B cell (primary cell): ENCODE measurements at regions of chr12 and their contacts with region 1.

Region 1: GRCh38 chr12:67630373-67631088 is 18.0 kb upstream of the DYRK2 start:
- DNase-seq: peak; percentile 87
- ATAC-seq: peak; percentile 100
- H3K4me3 ChIP-seq: peak overlapping the region in 3 of 5 experiments; percentile 6 to 55 (median 20)
- H3K4me3 Mint-ChIP-seq: peak overlapping the region; percentile 67
- H3K27ac ChIP-seq: peak overlapping the region; percentile 71 to 85
- H3K27ac Mint-ChIP-seq: peak overlapping the region; percentile 94
- H3K4me1 ChIP-seq: peaks cover 55 to 56% of the 10 kb centered on the region in 2 donors
- H3K4me1 Mint-ChIP-seq: peaks cover 60% of the 10 kb centered on the region
- H3K27me3 ChIP-seq: no peaks in the 10 kb centered on the region
- H3K27me3 Mint-ChIP-seq: no peaks in the 10 kb centered on the region
- CTCF ChIP-seq: no peak

Region 2: GRCh38 chr12:67364228-67364627 is 266.3 kb before region 1 on chr12:
- CTCF ChIA-PET with region 1: interaction called, 3 read pairs
- POLR2A ChIA-PET with region 1: interaction called, 11 read pairs
- intact Hi-C with region 1: no loop called
- DNase-seq: no peak
- ATAC-seq: no peak
- H3K4me3 ChIP-seq: no peak overlapping the region
- H3K4me3 Mint-ChIP-seq: no peak overlapping the region
- H3K27ac ChIP-seq: no peak overlapping the region
- H3K27ac Mint-ChIP-seq: no peak overlapping the region
- H3K4me1 ChIP-seq: no peaks in the 10 kb centered on the region
- H3K4me1 Mint-ChIP-seq: no peaks in the 10 kb centered on the region
- H3K27me3 ChIP-seq: no peaks in the 10 kb centered on the region
- H3K27me3 Mint-ChIP-seq: no peaks in the 10 kb centered on the region
- CTCF ChIP-seq: no peak

Region 3: GRCh38 chr12:67400742-67401141 is 229.8 kb before region 1 on chr12:
- CTCF ChIA-PET with region 1: no interaction called
- POLR2A ChIA-PET with region 1: no interaction called
- intact Hi-C with region 1: no loop called
- DNase-seq: no peak
- ATAC-seq: no peak
- H3K4me3 ChIP-seq: no peak overlapping the region
- H3K4me3 Mint-ChIP-seq: no peak overlapping the region
- H3K27ac ChIP-seq: no peak overlapping the region
- H3K27ac Mint-ChIP-seq: no peak overlapping the region
- H3K4me1 ChIP-seq: no peaks in the 10 kb centered on the region
- H3K4me1 Mint-ChIP-seq: no peaks in the 10 kb centered on the region
- H3K27me3 ChIP-seq: peaks cover 0 to 8% (median 2%) of the 10 kb centered on the region in 4 experiments
- H3K27me3 Mint-ChIP-seq: peaks cover 8% of the 10 kb centered on the region
- CTCF ChIP-seq: no peak

Region 4: GRCh38 chr12:67482751-67483671 is 147.5 kb before region 1 on chr12:
- CTCF ChIA-PET with region 1: no interaction called
- POLR2A ChIA-PET with region 1: no interaction called
- intact Hi-C with region 1: no loop called
- DNase-seq: peak; percentile 42
- ATAC-seq: peak; percentile 53
- H3K4me3 ChIP-seq: no peak overlapping the region
- H3K4me3 Mint-ChIP-seq: no peak overlapping the region
- H3K27ac ChIP-seq: no peak overlapping the region
- H3K27ac Mint-ChIP-seq: no peak overlapping the region
- H3K4me1 ChIP-seq: peaks cover 10 to 16% of the 10 kb centered on the region in 2 donors
- H3K4me1 Mint-ChIP-seq: peaks cover 22% of the 10 kb centered on the region
- H3K27me3 ChIP-seq: no peaks in the 10 kb centered on the region
- H3K27me3 Mint-ChIP-seq: no peaks in the 10 kb centered on the region
- CTCF ChIP-seq: no peak

Region 5: DNA sequence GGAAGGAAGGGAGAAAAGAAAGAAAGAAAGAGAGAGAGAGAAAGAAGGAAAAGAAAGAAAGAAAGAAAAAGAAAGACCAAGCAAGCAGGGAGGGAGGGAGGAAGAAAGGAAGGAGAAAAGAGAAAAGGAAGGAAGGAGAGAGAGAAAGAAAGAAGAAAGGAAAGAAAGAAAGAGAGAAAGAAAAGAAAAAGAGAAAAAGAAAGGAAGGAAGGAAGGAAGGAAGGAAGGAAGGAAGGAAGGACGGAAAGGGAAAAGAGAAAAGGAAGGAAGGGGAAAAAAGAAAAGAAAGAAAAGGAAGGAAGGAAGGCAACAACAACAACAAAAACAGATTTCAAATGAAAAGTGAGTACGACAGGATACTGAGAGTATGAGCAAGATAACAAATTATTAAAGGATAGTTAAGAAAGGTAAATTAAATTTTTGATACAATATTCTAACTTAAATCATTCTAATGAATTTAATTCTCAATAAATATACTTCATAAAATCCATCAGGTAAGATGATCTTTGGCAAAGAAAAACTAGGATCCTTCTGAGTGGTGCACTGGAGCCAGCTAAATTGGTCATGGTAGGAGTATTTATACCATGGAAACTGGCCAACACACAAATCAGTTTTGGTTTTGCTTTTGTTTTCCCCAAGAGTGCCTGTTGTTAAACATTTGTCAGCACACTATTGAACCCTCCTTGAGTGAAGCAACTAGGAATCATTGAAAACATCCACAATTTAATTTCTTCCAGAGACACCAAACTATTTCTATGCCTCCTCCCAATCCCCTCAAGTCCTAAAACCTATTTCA is 38.1 kb before region 1 on chr12:
- CTCF ChIA-PET with region 1: no interaction called
- POLR2A ChIA-PET with region 1: no interaction called
- intact Hi-C with region 1: loop called (anchors 2 kb)
- DNase-seq: peak; percentile 37
- ATAC-seq: peak; percentile 65
- H3K4me3 ChIP-seq: no peak overlapping the region
- H3K4me3 Mint-ChIP-seq: peak overlapping the region; percentile 8
- H3K27ac ChIP-seq: peak overlapping the region in 1 of 2 donors; percentile 26
- H3K27ac Mint-ChIP-seq: peak overlapping the region; percentile 59
- H3K4me1 ChIP-seq: peaks cover 19 to 21% of the 10 kb centered on the region in 2 donors
- H3K4me1 Mint-ChIP-seq: peaks cover 31% of the 10 kb centered on the region
- H3K27me3 ChIP-seq: no peaks in the 10 kb centered on the region
- H3K27me3 Mint-ChIP-seq: peaks cover 1% of the 10 kb centered on the region
- CTCF ChIP-seq: peak; percentile 50

Region 6: DNA sequence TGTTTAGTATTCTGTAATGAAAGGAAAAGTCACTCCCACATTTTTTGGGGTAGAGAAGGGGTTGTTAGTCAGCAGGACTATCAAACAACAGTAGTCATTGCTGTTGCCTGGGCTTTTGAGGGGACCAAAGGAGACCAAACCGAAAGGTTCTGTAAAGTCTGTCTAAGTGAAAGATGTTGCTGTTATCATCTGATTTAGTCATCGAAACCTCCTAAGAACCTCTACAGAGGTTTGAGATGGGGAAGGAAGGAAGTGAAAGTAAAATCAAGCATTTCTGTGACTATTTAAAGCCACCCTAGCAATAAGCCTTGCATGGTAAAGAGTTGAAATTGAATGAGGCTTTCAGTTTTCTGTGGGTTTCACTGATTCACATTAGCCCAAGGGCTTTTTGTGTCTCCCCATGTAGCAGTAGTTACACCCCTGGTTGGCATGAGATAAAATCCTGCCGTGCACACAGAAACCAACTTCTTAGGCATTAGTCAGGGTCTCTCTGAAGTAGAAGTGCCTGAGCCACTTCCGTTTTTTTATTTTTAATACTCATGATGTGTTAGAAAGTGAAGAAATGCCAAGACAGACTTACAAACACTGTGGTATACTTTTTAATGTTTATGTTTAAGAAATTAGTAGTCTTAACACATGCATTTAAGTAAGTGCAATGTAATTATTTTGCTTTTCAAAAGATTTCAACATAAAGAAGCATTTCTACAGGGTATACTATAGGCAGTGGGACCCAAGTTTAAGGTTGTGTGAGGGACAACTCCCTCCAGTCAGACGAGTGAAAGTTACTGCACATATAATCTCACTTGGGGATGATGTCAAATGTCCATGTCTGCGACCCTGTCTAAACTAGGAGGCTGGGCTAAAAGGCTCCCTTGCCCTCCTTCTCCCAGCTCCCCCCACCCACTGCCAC is 68.4 kb after region 1 on chr12:
- CTCF ChIA-PET with region 1: no interaction called
- POLR2A ChIA-PET with region 1: no interaction called
- intact Hi-C with region 1: loop called (anchors 1 kb)
- DNase-seq: peak; percentile 79
- ATAC-seq: peak; percentile 86
- H3K4me3 ChIP-seq: peak overlapping the region; percentile 8 to 65 (median 52)
- H3K4me3 Mint-ChIP-seq: peak overlapping the region; percentile 78
- H3K27ac ChIP-seq: peak overlapping the region; percentile 23 to 32
- H3K27ac Mint-ChIP-seq: peak overlapping the region; percentile 80
- H3K4me1 ChIP-seq: peaks cover 21 to 28% of the 10 kb centered on the region in 2 donors
- H3K4me1 Mint-ChIP-seq: peaks cover 33% of the 10 kb centered on the region
- H3K27me3 ChIP-seq: peaks cover 0 to 12% (median 3%) of the 10 kb centered on the region in 4 experiments
- H3K27me3 Mint-ChIP-seq: peaks cover 6% of the 10 kb centered on the region
- CTCF ChIP-seq: no peak